ENCODE measurements at regions of chr14 and their contacts with region 1.

Region 1: GRCh38 chr14:54566410-54567223 is at the start of gene SAMD4A:
- DNase-seq: peak; percentile 72
- H3K4me3 Mint-ChIP-seq: peak within 1 kb of the TSS; percentile 91
- H3K27ac Mint-ChIP-seq: peak within 1 kb of the TSS; percentile 72
- H3K4me1 Mint-ChIP-seq: peaks cover 27% of the 10 kb centered on the region
- H3K27me3 Mint-ChIP-seq: peaks cover 7% of the 10 kb centered on the region
- total RNA-seq, gene SAMD4A: 2.4 to 2.6 TPM

Region 2: DNA sequence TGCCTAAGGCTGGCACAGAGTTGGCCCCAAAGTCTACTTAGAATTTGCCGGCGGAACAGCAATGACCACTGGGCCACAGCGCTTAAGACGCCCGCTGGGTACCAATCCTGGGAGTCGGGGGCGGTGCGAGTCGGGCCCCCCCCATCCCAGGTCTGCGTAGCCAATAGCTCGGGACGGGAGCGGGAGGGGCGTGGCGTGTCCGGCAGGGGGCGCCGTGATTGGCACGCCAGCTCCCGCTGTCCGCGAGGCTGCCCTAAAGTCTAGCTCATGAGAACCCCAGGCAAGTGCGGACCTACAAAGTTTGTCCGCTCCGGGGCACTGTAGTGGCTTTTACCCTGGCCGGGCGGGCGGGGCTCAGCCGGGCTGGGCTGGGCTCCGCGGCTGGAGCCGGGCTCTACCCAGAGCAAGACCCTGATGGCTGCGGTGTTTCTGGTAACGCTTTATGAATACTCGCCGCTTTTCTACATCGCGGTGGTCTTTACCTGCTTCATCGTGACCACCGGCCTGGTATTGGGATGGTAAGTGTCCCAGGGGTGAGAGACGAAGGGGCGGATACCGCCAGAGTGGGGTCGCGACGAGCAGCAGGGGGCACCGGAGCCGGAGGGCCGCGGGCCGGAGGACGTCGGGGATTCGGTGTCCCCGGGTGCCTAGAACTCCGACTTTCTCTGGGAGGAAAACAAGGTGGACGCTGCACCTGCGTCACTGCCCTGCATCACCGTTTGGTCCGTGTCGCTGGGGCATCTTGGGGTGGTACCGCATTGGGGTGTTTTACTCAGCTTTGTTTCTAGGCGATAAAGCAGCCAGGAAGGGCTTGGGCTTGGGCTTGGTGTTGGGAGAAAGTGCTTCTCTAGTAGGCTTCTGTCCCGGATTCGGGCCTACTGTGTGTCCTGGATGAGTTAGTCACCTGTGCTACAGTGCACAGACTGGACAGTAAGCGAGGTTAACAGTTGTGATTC is 56.8 kb before region 1 on chr14 and contains the start of gene CGRRF1:
- CTCF ChIA-PET with region 1: interaction called, 4 read pairs
- POLR2A ChIA-PET with region 1: interaction called, 4 read pairs
- intact Hi-C with region 1: loop called (anchors 1 kb)
- DNase-seq: peak; percentile 99
- H3K4me3 Mint-ChIP-seq: peak within 1 kb of the TSS; percentile 94
- H3K27ac Mint-ChIP-seq: peak within 1 kb of the TSS; percentile 76
- H3K4me1 Mint-ChIP-seq: peaks cover 39% of the 10 kb centered on the region
- H3K27me3 Mint-ChIP-seq: no peaks in the 10 kb centered on the region
- total RNA-seq, gene CGRRF1: 13.7 to 15.1 TPM

Region 3: DNA sequence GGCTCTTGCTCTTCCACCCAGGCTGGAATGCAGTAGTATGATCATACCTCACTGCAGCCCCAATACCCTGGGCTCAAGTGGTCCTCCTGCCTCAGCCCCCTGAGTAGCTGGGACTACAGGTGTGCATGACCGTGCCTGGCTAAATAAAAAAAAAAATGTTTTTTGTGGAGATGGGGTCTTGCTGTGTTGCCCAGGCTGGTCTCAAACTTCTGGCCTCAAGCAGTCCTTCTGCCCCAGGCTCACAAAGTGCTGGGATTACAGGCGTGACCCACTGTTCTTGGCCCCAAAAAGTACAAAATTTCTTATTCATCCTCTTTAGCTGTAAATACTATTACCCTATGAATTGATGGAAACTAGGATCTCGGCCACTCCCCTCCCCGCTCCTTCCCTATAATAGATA is 42.2 kb before region 1 on chr14:
- CTCF ChIA-PET with region 1: no interaction called
- POLR2A ChIA-PET with region 1: no interaction called
- intact Hi-C with region 1: no loop called
- DNase-seq: no peak
- H3K4me3 Mint-ChIP-seq: no peak overlapping the region
- H3K27ac Mint-ChIP-seq: no peak overlapping the region
- H3K4me1 Mint-ChIP-seq: no peaks in the 10 kb centered on the region
- H3K27me3 Mint-ChIP-seq: no peaks in the 10 kb centered on the region

Region 4: DNA sequence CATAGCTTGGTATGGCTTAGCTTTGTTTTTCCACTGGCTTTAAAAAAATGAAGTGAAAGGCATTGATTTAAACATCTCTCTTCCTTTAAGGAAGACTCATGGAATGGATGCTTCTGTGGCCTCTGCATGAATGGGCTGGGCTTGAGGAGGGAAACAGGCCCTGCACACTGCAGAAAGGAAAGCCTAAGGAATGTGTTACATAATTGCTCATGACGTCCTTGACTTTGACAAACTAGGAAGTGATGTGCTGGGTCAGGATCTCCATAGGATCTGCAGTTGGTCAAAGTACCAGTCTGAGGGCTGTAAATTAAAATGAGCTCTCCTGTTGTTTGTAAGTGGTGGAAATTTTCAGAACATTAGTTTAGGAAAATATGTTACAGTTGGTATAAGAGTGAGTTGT is 13.0 kb after region 1 on chr14:
- CTCF ChIA-PET with region 1: no interaction called
- POLR2A ChIA-PET with region 1: no interaction called
- intact Hi-C with region 1: no loop called
- DNase-seq: no peak
- H3K4me3 Mint-ChIP-seq: no peak overlapping the region
- H3K27ac Mint-ChIP-seq: no peak overlapping the region
- H3K4me1 Mint-ChIP-seq: no peaks in the 10 kb centered on the region
- H3K27me3 Mint-ChIP-seq: no peaks in the 10 kb centered on the region

Region 5: DNA sequence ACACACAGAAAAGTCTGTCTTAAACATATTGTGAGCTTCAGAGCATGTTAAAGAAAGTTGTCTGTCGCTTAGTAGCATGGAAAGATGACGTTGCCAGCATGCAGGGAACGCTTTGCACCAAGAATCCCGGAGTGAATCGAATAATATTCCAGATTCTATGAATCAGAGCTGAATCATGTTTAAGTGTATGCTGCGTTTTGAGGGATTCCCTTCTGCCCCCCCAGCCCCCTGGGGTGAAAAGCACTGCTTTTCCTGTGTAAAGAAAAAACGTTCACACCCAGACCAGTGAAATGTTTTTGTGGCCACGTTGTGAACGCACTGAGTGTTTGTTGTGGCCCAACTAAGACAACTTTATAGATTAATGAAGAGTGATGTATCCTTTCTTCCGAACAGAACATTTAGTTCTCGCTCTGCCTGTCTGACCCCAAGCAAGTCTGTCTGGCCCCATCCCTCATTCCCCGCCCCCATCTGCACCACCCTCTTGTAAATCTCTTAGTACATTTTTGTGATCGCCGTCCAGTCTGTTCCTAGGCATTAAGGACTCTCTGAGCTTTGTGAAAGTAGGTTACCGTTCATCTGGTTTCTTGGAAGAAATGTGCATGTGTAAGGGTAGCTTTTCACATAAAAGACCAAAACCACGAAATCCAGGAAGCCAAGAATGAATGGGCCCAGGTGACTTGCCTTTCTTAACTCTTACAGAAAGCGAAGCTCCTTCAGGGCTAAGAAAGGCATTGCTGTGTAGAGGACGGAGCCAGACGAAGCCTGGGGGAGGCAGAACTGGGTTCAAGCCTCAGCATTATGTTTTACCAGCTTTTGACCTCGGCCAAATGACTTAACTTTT is 103.3 kb after region 1 on chr14:
- CTCF ChIA-PET with region 1: interaction called, 7 read pairs
- POLR2A ChIA-PET with region 1: interaction called, 10 read pairs
- intact Hi-C with region 1: loop called (anchors 2 kb)
- DNase-seq: peak; percentile 49
- H3K4me3 Mint-ChIP-seq: no peak overlapping the region
- H3K27ac Mint-ChIP-seq: peak overlapping the region; percentile 26
- H3K4me1 Mint-ChIP-seq: peaks cover 43% of the 10 kb centered on the region
- H3K27me3 Mint-ChIP-seq: peaks cover 11% of the 10 kb centered on the region

Region 6: DNA sequence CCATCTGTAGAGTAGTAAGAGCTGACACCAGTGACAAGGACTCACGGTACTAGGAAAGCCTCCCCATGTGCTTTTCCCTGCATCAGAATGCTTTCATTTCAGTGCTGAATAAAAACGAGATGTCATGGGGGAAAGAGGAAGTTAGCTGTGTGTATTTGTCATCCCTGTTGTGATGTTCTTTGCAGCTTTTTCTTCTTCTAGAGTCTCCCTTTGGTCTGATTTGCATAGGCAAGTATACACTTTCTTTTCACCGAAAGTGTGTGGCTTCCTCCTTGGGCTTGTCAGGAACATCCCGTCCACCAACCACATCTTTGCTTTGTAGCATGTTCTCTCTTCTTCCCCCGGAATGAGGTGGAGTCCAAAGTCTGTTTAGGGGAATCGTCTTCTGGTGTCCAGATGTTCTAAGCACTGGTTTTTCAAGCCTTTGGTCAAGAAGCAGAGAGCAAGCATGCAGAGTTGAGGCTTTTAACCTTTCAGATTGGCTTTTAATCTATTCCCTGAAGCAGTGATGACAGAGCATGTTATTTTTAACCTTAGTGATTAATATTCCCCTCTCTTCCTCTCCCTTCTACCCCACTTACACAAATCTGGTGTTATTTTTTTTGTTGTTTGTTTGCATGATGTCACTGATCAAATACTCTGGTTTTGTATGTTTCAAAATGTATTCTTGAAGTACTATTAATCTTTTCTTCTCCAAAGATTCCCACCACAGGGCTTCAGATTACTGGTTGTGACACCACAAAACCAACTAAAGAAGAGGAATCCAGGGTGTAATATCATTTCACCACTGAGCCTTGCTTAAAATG is 163.7 kb after region 1 on chr14:
- CTCF ChIA-PET with region 1: interaction called, 26 read pairs
- POLR2A ChIA-PET with region 1: interaction called, 3 read pairs
- intact Hi-C with region 1: loop called (anchors 1 kb)
- DNase-seq: peak; percentile 63
- H3K4me3 Mint-ChIP-seq: peak overlapping the region; percentile 38
- H3K27ac Mint-ChIP-seq: peak overlapping the region; percentile 90
- H3K4me1 Mint-ChIP-seq: peaks cover 38% of the 10 kb centered on the region
- H3K27me3 Mint-ChIP-seq: peaks cover 12% of the 10 kb centered on the region

Region 7: DNA sequence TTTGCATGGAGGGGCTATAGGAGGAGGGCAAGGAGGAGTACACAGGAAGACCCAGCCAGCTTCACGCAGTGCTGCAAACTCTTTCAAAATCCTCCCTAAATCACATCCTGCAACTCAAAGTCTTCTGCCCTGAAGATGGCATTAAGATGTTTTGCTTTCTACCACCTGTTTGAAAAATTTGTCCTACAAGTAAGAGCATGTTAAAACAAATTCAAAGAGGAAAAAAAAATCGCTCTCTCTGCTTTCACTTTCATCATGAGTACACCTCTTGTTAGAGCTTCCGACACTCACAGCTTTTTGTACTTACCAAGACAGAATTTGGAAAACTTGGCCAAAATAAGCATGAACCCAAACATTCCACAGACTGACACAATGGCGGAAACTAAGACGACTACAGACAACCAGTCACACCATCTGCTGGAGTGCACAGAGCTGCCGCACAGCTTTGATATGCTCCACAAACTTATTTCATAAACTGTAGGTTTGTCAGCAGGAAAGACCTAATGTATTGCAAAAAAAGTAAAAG is 314.7 kb after region 1 on chr14:
- CTCF ChIA-PET with region 1: interaction called, 4 read pairs
- POLR2A ChIA-PET with region 1: no interaction called
- intact Hi-C with region 1: loop called (anchors 2 kb)
- DNase-seq: peak; percentile 34
- H3K4me3 Mint-ChIP-seq: peak overlapping the region; percentile 82
- H3K27ac Mint-ChIP-seq: peak overlapping the region; percentile 94
- H3K4me1 Mint-ChIP-seq: peaks cover 46% of the 10 kb centered on the region
- H3K27me3 Mint-ChIP-seq: no peaks in the 10 kb centered on the region

Measured in activated CD4-positive, alpha-beta memory T cell treated with anti-CD3 and anti-CD28 coated beads for 36 hours (primary cell).